ENCODE measurements at regions of chr16 and their contacts with region 1.

Region 1: GRCh38 chr16:50326949-50327402 is 41.8 kb downstream of the BRD7 start:
- DNase-seq: peak; percentile 50
- ATAC-seq: peak; percentile 85
- H3K4me3 ChIP-seq: no peak overlapping the region
- H3K4me3 Mint-ChIP-seq: peak overlapping the region; percentile 24
- H3K27ac ChIP-seq: peak overlapping the region; percentile 38 to 63
- H3K27ac Mint-ChIP-seq: peak overlapping the region; percentile 74
- H3K4me1 ChIP-seq: peaks cover 0 to 31% of the 10 kb centered on the region in 2 donors
- H3K4me1 Mint-ChIP-seq: peaks cover 51% of the 10 kb centered on the region
- H3K27me3 ChIP-seq: no peaks in the 10 kb centered on the region
- H3K27me3 Mint-ChIP-seq: no peaks in the 10 kb centered on the region
- CTCF ChIP-seq: peak; percentile 76

Region 2: GRCh38 chr16:50245417-50246298 is 81.3 kb before region 1 on chr16:
- CTCF ChIA-PET with region 1: interaction called, 13 read pairs
- POLR2A ChIA-PET with region 1: no interaction called
- intact Hi-C with region 1: loop called (anchors 1 kb)
- DNase-seq: peak; percentile 57
- ATAC-seq: peak; percentile 94
- H3K4me3 ChIP-seq: peak overlapping the region in 4 of 5 experiments; percentile 60 to 69 (median 62)
- H3K4me3 Mint-ChIP-seq: peak overlapping the region; percentile 74
- H3K27ac ChIP-seq: no peak overlapping the region
- H3K27ac Mint-ChIP-seq: peak overlapping the region; percentile 50
- H3K4me1 ChIP-seq: peaks cover 6 to 15% of the 10 kb centered on the region in 2 donors
- H3K4me1 Mint-ChIP-seq: peaks cover 11% of the 10 kb centered on the region
- H3K27me3 ChIP-seq: peaks cover 0 to 11% (median 4%) of the 10 kb centered on the region in 4 experiments
- H3K27me3 Mint-ChIP-seq: no peaks in the 10 kb centered on the region
- CTCF ChIP-seq: peak; percentile 39

Region 3: GRCh38 chr16:50273681-50274325 is 53.2 kb before region 1 on chr16:
- CTCF ChIA-PET with region 1: interaction called, 34 read pairs
- POLR2A ChIA-PET with region 1: no interaction called
- intact Hi-C with region 1: no loop called
- DNase-seq: peak; percentile 88
- ATAC-seq: peak; percentile 81
- H3K4me3 ChIP-seq: peak overlapping the region; percentile 12 to 84 (median 80)
- H3K4me3 Mint-ChIP-seq: peak overlapping the region; percentile 98
- H3K27ac ChIP-seq: peak overlapping the region; percentile 93 to 97
- H3K27ac Mint-ChIP-seq: peak overlapping the region; percentile 100
- H3K4me1 ChIP-seq: peaks cover 63 to 74% of the 10 kb centered on the region in 2 donors
- H3K4me1 Mint-ChIP-seq: peaks cover 75% of the 10 kb centered on the region
- H3K27me3 ChIP-seq: no peaks in the 10 kb centered on the region
- H3K27me3 Mint-ChIP-seq: no peaks in the 10 kb centered on the region
- CTCF ChIP-seq: no peak

Region 4: GRCh38 chr16:50281964-50282538 is 44.9 kb before region 1 on chr16:
- CTCF ChIA-PET with region 1: interaction called, 17 read pairs
- POLR2A ChIA-PET with region 1: no interaction called
- intact Hi-C with region 1: no loop called
- DNase-seq: peak; percentile 92
- ATAC-seq: peak; percentile 90
- H3K4me3 ChIP-seq: peak overlapping the region in 4 of 5 experiments; percentile 34 to 54 (median 50)
- H3K4me3 Mint-ChIP-seq: peak overlapping the region; percentile 84
- H3K27ac ChIP-seq: peak overlapping the region; percentile 65 to 93
- H3K27ac Mint-ChIP-seq: peak overlapping the region; percentile 100
- H3K4me1 ChIP-seq: peaks cover 85 to 87% of the 10 kb centered on the region in 2 donors
- H3K4me1 Mint-ChIP-seq: peaks cover 86% of the 10 kb centered on the region
- H3K27me3 ChIP-seq: no peaks in the 10 kb centered on the region
- H3K27me3 Mint-ChIP-seq: no peaks in the 10 kb centered on the region
- CTCF ChIP-seq: no peak

Region 5: GRCh38 chr16:50360033-50360778 is 33.2 kb after region 1 on chr16:
- CTCF ChIA-PET with region 1: interaction called, 329 read pairs
- POLR2A ChIA-PET with region 1: no interaction called
- intact Hi-C with region 1: loop called (anchors 1 kb)
- DNase-seq: no peak
- ATAC-seq: no peak
- H3K4me3 ChIP-seq: no peak overlapping the region
- H3K4me3 Mint-ChIP-seq: no peak overlapping the region
- H3K27ac ChIP-seq: peak overlapping the region in 1 of 2 donors; percentile 35
- H3K27ac Mint-ChIP-seq: peak overlapping the region; percentile 46
- H3K4me1 ChIP-seq: peaks cover 2 to 4% of the 10 kb centered on the region in 2 donors
- H3K4me1 Mint-ChIP-seq: peaks cover 31% of the 10 kb centered on the region
- H3K27me3 ChIP-seq: no peaks in the 10 kb centered on the region
- H3K27me3 Mint-ChIP-seq: no peaks in the 10 kb centered on the region
- CTCF ChIP-seq: no peak

Region 6: GRCh38 chr16:50368410-50369132 is 41.6 kb after region 1 on chr16 and contains the start of gene BRD7:
- CTCF ChIA-PET with region 1: interaction called, 15 read pairs
- POLR2A ChIA-PET with region 1: no interaction called
- intact Hi-C with region 1: loop called (anchors 1 kb)
- DNase-seq: peak; percentile 85
- ATAC-seq: peak; percentile 95
- H3K4me3 ChIP-seq: peak within 1 kb of the TSS; percentile 45 to 82 (median 66)
- H3K4me3 Mint-ChIP-seq: peak within 1 kb of the TSS; percentile 91
- H3K27ac ChIP-seq: peak within 1 kb of the TSS; percentile 57 to 88
- H3K27ac Mint-ChIP-seq: peak within 1 kb of the TSS; percentile 88
- H3K4me1 ChIP-seq: peaks cover 26 to 32% of the 10 kb centered on the region in 2 donors
- H3K4me1 Mint-ChIP-seq: peaks cover 41% of the 10 kb centered on the region
- H3K27me3 ChIP-seq: no peaks in the 10 kb centered on the region
- H3K27me3 Mint-ChIP-seq: peaks cover 4% of the 10 kb centered on the region
- CTCF ChIP-seq: peak; percentile 56
- total RNA-seq, gene BRD7: 64.5 and 69.7 TPM in 2 replicates

Measured in B cell (primary cell).